ENCODE measurements at regions of chr1 and their contacts with region 1.

Region 1: DNA sequence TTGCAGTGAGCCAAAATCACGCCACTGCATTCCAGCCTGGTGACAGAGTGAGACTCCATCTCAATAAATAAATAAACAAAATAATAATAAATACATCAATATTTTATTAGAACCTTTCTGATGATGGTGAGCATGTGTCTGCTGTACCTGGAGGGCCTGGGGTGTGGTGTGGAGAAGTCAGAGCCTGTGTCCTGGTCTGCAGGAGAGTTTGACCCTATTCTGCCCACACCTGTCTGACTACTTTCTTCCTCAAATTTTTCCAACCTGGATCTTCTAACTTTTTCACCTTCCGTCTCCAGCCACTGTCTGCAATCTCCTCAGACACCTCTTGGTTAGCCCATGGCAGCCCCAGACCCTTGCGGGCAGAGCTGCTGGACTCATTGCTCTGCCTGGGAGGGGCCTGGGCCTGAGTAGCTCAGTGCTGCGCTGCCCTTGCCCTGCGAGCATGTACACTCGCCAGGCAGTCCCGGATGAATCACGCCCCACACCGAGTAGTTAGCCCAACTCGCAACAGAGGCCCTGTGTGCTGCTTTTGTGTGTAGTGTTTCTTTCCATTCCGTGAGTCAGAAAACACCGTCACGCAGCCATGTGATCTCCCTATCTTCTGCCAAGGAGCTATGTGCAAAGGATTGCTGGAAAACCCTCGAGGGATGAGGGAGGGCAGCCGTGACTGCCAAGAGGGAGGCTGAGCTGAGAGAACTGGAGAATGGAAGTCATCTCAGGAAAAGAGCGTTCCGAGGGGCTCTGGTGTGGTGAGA is 37.2 kb downstream of the NENF start:
- DNase-seq: peak; percentile 99
- ATAC-seq: peak; percentile 100
- H3K4me3 ChIP-seq: no peak overlapping the region
- H3K27ac ChIP-seq: peak overlapping the region; percentile 58; the same call in 1 of the 2 replicates
- H3K4me1 ChIP-seq: 0 out of 2 replicates have a peak, but pooled peaks cover 1% of the 10 kb centered on the region
- H3K27me3 ChIP-seq: peaks cover 2% of the 10 kb centered on the region; the same call in 1 of the 2 replicates
- CTCF ChIP-seq: no peak
- POLR2A ChIP-seq: no peak
- RAD21 ChIP-seq: peak; percentile 30; the same call in 1 of the 2 replicates

Region 2: DNA sequence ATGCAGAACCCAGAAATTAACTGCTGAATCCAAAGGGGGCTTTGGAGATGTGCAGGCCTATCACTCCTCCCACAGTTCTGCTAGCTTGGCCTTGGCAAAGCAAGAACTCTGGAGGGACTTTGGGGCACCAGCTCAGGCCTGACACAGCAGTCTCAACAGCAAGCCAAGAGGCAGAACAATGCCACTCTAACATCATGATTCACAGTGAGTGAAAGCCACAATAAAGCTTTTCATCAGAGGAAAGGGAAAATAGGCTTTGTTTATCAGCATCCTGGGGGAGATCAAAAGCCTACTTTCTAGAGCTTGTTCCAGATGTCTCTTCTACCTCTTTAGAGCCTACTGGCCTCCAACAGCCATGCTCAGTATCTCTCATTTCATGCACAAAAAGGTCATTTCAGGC is 1619.3 kb before region 1 on chr1:
- CTCF ChIA-PET with region 1: no interaction called
- POLR2A ChIA-PET with region 1: interaction called, 19 read pairs
- dilution Hi-C with region 1: no loop called
- in situ Hi-C with region 1: no loop called
- intact Hi-C with region 1: no loop called
- DNase-seq: no peak
- ATAC-seq: no peak
- H3K4me3 ChIP-seq: no peak overlapping the region
- H3K27ac ChIP-seq: no peak overlapping the region
- H3K4me1 ChIP-seq: no peaks in the 10 kb centered on the region
- H3K27me3 ChIP-seq: no peaks in the 10 kb centered on the region
- CTCF ChIP-seq: no peak
- POLR2A ChIP-seq: no peak
- RAD21 ChIP-seq: no peak

Region 3: DNA sequence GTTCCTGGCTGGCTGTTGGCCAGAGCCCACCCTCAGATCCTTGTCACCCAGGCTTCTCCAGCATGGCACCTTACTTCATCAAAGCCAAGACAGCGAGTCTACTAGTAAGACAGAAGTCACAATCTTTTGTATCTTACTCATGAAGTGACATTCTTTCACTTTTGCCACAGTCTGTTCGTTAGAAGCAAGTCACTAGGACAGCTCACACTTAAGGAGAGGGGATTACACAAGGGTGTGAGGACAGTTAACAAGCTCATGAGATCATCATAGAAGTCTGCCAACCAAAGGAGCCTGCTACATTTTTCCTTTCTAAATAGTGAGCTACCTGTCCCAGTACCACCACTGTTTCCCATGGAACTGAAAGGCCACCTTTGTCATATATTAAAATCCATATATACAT is 116.7 kb before region 1 on chr1:
- CTCF ChIA-PET with region 1: no interaction called
- POLR2A ChIA-PET with region 1: no interaction called
- dilution Hi-C with region 1: no loop called
- in situ Hi-C with region 1: no loop called
- intact Hi-C with region 1: no loop called
- DNase-seq: no peak
- ATAC-seq: no peak
- H3K4me3 ChIP-seq: no peak overlapping the region
- H3K27ac ChIP-seq: no peak overlapping the region
- H3K4me1 ChIP-seq: peaks cover 5% of the 10 kb centered on the region
- H3K27me3 ChIP-seq: no peaks in the 10 kb centered on the region
- CTCF ChIP-seq: no peak
- POLR2A ChIP-seq: no peak
- RAD21 ChIP-seq: no peak

Region 4: DNA sequence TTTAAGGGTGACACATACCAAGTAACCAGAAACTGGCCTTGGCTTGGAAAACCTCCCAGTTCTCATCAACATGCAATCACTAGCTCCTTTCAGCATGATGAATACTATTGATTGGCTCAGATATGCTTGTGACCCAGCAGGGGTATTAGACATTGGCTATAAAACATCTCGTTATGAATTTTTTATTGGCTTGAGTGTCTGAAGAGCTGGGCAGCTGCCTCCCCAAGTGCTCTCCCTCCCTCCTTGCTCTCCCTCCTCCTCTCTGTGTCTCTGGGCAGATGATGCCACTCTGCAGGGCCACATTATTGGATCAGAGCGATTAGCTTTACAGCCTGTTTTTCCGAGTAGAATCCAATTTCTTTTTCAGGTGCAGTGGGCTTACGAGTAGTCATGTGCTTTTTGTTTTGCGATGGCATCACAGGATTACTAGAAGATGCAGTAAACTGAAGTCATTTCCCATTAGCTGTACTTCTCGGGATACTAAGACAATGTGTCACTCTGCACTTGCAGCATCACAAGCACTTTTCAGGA is 59.4 kb after region 1 on chr1:
- CTCF ChIA-PET with region 1: no interaction called
- POLR2A ChIA-PET with region 1: no interaction called
- dilution Hi-C with region 1: no loop called
- in situ Hi-C with region 1: no loop called
- intact Hi-C with region 1: no loop called
- DNase-seq: peak; percentile 61
- ATAC-seq: no peak; the same call in 1 of the 2 replicates
- H3K4me3 ChIP-seq: no peak overlapping the region
- H3K27ac ChIP-seq: no peak overlapping the region
- H3K4me1 ChIP-seq: no peaks in the 10 kb centered on the region
- H3K27me3 ChIP-seq: peaks cover 25% of the 10 kb centered on the region
- CTCF ChIP-seq: no peak
- POLR2A ChIP-seq: no peak
- RAD21 ChIP-seq: no peak